Common myeloid progenitor, CD34-positive (primary cell): ENCODE measurements at regions of chr14 and their contacts with region 1.

Region 1: DNA sequence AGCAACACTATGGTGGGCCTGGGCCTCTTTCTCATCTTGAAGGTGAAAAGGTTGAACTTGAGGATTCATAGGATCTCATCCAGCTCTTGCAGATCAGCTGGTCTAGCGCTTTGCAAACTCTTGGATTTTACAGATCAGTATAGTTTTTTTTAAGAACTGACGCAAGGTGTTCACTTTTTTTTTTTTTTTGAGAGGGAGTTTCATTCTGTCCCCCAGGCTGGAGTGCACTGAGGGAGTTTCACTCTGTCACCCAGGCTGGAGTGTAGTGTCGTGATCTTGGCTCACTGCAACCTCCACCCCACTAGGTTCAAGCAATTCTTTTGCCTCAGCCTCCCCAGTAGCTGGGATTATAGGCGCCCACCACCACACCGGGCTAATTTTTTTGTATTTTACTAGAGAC is 20.4 kb upstream of the LGMN start:
- DNase-seq: no peak
- H3K4me3 ChIP-seq: no peak overlapping the region
- H3K27ac ChIP-seq: no peak overlapping the region
- H3K4me1 ChIP-seq: peaks cover 0 to 3% (median 0%) of the 10 kb centered on the region in 4 experiments
- H3K27me3 ChIP-seq: no peaks in the 10 kb centered on the region

Region 2: GRCh38 chr14:92719890-92720323 is 48.9 kb before region 1 on chr14:
- CTCF ChIA-PET with region 1: interaction called, 10 read pairs
- POLR2A ChIA-PET with region 1: no interaction called
- DNase-seq: no peak
- H3K4me3 ChIP-seq: no peak overlapping the region
- H3K27ac ChIP-seq: no peak overlapping the region
- H3K4me1 ChIP-seq: no peaks in the 10 kb centered on the region
- H3K27me3 ChIP-seq: no peaks in the 10 kb centered on the region

Region 3: DNA sequence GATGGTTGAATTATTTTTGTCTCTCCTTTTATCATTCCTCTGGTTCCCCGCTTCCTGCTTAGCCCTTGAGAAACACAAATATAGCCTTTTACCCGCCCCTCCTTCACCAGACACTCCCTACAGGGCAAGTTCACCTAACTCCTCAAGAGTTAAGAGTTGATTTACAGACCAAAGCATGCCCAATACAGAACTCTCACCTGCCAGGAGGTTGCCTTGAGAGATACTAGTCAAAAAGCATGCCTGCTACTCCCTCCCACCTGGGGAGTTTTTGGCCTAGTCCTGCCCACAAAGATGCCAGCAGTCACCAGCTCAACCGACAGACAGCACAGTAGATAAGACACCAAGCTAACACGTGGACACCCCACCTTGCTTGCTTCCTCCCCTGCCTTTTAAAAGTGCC is 31.6 kb before region 1 on chr14:
- CTCF ChIA-PET with region 1: no interaction called
- POLR2A ChIA-PET with region 1: no interaction called
- DNase-seq: no peak
- H3K4me3 ChIP-seq: no peak overlapping the region
- H3K27ac ChIP-seq: no peak overlapping the region
- H3K4me1 ChIP-seq: peaks cover 0 to 10% (median 3%) of the 10 kb centered on the region in 4 experiments
- H3K27me3 ChIP-seq: no peaks in the 10 kb centered on the region

Region 4: GRCh38 chr14:92783816-92784431 is 15.1 kb after region 1 on chr14:
- CTCF ChIA-PET with region 1: interaction called, 11 read pairs
- POLR2A ChIA-PET with region 1: no interaction called
- DNase-seq: peak; percentile 66 to 81 (median 77)
- H3K4me3 ChIP-seq: no peak overlapping the region
- H3K27ac ChIP-seq: no peak overlapping the region
- H3K4me1 ChIP-seq: peaks cover 0 to 6% (median 2%) of the 10 kb centered on the region in 4 experiments
- H3K27me3 ChIP-seq: no peaks in the 10 kb centered on the region

Region 5: GRCh38 chr14:92803712-92804111 is 34.9 kb after region 1 on chr14:
- CTCF ChIA-PET with region 1: no interaction called
- POLR2A ChIA-PET with region 1: no interaction called
- DNase-seq: no peak
- H3K4me3 ChIP-seq: no peak overlapping the region
- H3K27ac ChIP-seq: no peak overlapping the region
- H3K4me1 ChIP-seq: peaks cover 0 to 12% (median 8%) of the 10 kb centered on the region in 4 experiments
- H3K27me3 ChIP-seq: no peaks in the 10 kb centered on the region